ENCODE measurements at regions of chr12 and their contacts with region 1.

Region 1: GRCh38 chr12:29710104-29710503 is 73.6 kb downstream of the TMTC1 start:
- DNase-seq: no peak
- H3K4me3 ChIP-seq: peak overlapping the region in 1 of 2 donors; percentile 26
- H3K27ac ChIP-seq: peak overlapping the region; percentile 43 to 57
- H3K4me1 ChIP-seq: peaks cover 2 to 31% of the 10 kb centered on the region in 2 donors
- H3K27me3 ChIP-seq: no peaks in the 10 kb centered on the region
- CTCF ChIP-seq: no peak

Region 2: GRCh38 chr12:29611906-29612305 is 98.2 kb before region 1 on chr12:
- intact Hi-C with region 1: loop called (anchors 5 kb)
- DNase-seq: peak in 1 of 2 donors; percentile 67
- H3K4me3 ChIP-seq: no peak overlapping the region
- H3K27ac ChIP-seq: peak overlapping the region; percentile 24 to 32
- H3K4me1 ChIP-seq: peaks cover 0 to 39% of the 10 kb centered on the region in 2 donors
- H3K27me3 ChIP-seq: no peaks in the 10 kb centered on the region
- CTCF ChIP-seq: no peak

Region 3: DNA sequence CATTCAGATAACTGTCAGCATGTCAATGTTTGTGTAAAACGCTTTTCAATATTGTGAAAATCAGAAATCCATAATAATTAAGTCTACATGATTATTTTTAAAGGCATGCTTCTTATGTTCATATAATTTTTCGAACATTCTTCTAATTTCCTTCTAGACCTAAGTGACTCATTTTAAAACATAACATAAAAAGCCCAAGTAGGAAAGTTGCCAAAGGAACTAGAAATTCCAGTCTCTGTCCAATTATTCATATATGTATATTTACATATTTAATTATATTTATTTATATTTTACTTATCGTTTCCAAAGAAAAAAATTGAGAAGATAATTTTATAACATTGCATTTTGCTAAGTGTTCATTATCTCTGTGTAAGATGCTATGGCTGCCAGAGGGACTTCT is 36.8 kb before region 1 on chr12:
- intact Hi-C with region 1: no loop called
- DNase-seq: no peak
- H3K4me3 ChIP-seq: no peak overlapping the region
- H3K27ac ChIP-seq: no peak overlapping the region
- H3K4me1 ChIP-seq: peaks cover 0 to 6% of the 10 kb centered on the region in 2 donors
- H3K27me3 ChIP-seq: no peaks in the 10 kb centered on the region
- CTCF ChIP-seq: no peak

Region 4: GRCh38 chr12:29769162-29769858 is 59.2 kb after region 1 on chr12:
- intact Hi-C with region 1: loop called (anchors 5 kb)
- DNase-seq: peak in 1 of 2 donors; percentile 70
- H3K4me3 ChIP-seq: no peak overlapping the region
- H3K27ac ChIP-seq: no peak overlapping the region
- H3K4me1 ChIP-seq: peaks cover 0 to 15% of the 10 kb centered on the region in 2 donors
- H3K27me3 ChIP-seq: no peaks in the 10 kb centered on the region
- CTCF ChIP-seq: no peak

Measured in ascending aorta (tissue), 2 donors.